Heart left ventricle (tissue), 16 donors: ENCODE measurements at regions of chr9 and their contacts with region 1.

Region 1: DNA sequence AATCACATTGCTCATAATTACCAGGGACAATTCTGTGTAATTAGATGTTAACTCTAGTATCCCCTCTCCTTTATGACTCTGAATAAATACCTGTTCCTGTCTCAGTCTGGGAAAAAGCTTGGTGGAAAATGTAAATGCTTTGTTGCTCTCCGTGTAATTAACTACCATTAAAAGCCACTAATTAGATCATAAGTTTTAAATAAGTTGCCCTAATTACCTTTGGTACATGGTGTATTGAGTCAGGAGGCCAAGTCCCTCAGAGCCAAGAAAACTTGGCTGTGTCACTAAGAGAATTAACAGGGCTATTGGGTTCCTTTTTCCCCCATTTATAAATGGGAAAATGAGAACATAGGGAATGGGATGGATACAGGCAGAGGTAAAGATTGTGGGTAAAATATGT is 617.6 kb downstream of the TLR4 start:
- DNase-seq: peak in 1 of 5 donors; percentile 13
- ATAC-seq: peak in 3 of 4 donors; percentile 51 to 72 (median 60)
- H3K4me3 ChIP-seq: no peak overlapping the region
- H3K27ac ChIP-seq: no peak overlapping the region
- H3K4me1 ChIP-seq: peaks cover 0 to 9% (median 0%) of the 10 kb centered on the region in 12 donors
- H3K27me3 ChIP-seq: no peaks in the 10 kb centered on the region
- CTCF ChIP-seq: no peak
- POLR2A ChIP-seq: no peak

Region 2: GRCh38 chr9:118473521-118473920 is 151.7 kb after region 1 on chr9:
- intact Hi-C with region 1: loop called in 1 of 10 experiments (anchors 10 kb)
- DNase-seq: peak in 2 of 5 donors; percentile 8 to 36
- ATAC-seq: peak; percentile 67 to 80 (median 75)
- H3K4me3 ChIP-seq: no peak overlapping the region
- H3K27ac ChIP-seq: no peak overlapping the region
- H3K4me1 ChIP-seq: no peaks in the 10 kb centered on the region
- H3K27me3 ChIP-seq: no peaks in the 10 kb centered on the region
- CTCF ChIP-seq: no peak
- POLR2A ChIP-seq: no peak